Left cardiac atrium (tissue), 4 donors: ENCODE measurements at regions of chrX and their contacts with region 1.

Region 1: DNA sequence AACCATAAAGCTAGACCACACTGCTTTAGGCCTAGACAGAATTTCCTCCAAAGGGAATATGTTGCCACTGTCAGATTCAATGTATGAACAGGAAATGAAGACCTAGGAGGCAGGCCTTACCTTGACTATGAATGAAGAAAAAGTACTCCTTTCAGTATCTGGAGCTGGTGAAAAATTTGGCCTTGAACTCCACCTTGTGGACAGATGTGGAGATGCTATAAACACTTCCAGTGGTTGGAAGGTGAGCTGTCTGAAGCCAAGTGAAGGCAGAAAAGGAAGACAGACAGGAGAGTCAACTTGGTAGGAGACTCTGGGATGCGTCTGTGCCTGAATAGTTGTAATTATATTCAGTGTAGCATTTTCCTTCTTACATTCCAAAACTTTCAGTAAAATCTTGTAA is 17.2 kb downstream of the SPIN3 start:
- DNase-seq: no peak
- ATAC-seq: peak; percentile 46 to 68

Region 2: GRCh38 chrX:56802921-56803849 is 175.0 kb before region 1 on chrX:
- intact Hi-C with region 1: loop called in 1 of 2 experiments (anchors 1 kb)
- DNase-seq: peak; percentile 84
- ATAC-seq: peak; percentile 67 to 84

Region 3: DNA sequence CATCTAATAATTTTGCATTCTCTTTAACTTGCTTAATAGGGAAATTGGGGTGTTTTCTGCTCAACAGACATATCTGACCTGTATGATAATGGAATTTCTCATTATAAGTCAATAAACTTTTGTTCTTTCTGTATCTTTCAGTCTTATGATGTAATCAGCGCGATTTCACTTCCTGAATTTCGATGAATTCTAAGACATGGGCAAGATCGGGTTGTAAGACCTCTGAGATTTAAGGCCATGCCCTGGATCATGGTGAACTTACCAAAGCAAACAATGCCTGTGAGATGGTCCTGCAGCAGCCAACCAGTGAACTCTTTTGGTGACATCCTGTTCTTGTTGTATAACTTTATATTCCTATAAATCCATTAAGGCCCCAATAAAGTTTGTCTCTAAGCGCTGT is 161.0 kb before region 1 on chrX:
- intact Hi-C with region 1: loop called in 1 of 2 experiments (anchors 5 kb)
- DNase-seq: no peak
- ATAC-seq: no peak

Region 4: GRCh38 chrX:57417827-57418226 is 439.7 kb after region 1 on chrX:
- intact Hi-C with region 1: no loop called
- DNase-seq: no peak
- ATAC-seq: no peak